Dorsolateral prefrontal cortex (tissue), 120 donors: ENCODE measurements at regions of chr10 and their contacts with region 1.

Region 1: DNA sequence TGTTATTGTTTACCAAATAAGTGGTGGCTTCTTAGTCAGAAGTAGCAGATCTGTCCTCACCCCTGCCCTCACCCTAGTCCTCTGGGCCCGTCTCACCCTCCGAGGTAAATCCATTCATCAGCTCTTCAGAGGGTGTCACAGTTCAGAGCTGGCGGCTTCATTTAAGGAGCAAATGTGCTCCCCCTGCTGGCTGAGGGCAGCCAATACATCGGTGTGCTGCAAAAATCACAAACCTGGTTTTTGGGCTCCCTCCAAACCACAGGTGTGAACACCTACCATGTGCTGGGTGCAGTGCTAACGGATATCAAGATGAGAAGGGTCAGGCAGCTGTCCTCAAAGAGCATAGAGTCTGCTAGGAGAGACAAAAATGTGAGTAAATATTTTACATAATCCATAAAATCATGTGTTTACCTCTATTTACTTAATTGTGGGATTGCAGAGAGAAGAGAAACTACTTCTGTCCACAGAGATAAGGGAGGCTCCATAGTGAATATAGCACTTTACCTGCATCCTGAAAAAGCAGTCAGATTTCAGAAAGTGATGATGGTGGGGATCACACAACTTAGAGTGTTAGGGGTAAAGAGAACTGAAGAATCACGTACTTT is 15.5 kb upstream of the CRTAC1 start:
- DNase-seq: peak; percentile 46 to 70 (median 55)
- H3K4me3 ChIP-seq: no peak overlapping the region
- H3K27ac ChIP-seq: peak overlapping the region in 4 of 59 donors; percentile 59 to 79 (median 69)
- H3K27me3 ChIP-seq: peaks cover 0 to 5% (median 0%) of the 10 kb centered on the region in 45 donors
- CTCF ChIP-seq: peak; percentile 57 to 93 (median 87)

Region 2: DNA sequence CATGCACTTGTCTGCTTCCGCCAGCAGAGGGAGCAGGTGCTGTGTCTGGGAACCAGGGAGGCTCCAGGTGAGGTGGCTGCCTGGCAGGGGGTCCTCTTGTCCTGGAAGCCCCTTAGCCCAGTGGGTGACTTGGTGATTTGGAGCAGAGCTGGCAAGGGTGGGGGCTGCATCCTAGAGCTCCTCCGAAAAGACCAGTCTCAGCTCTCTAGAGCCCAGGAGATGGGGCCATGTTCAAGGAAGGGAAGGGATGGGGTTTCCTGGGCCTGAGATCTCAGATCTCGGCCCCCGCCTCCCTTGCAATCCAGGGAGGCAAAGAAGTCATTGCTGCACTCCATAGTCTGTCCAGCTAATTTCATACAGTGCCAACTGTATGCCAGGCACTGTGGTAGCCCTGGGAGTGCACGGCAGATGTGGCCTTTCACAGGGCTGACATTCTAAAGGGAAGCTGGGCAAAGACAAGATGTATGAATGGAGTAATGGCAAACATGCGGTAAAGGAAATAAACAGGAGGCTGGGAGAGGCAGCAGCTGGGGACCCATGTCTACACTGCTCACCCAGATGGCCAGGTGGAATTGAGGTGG is 253.7 kb before region 1 on chr10:
- intact Hi-C with region 1: loop called in 1 of 2 experiments (anchors 10 kb)
- DNase-seq: peak in 9 of 10 donors; percentile 61 to 86 (median 72)
- H3K4me3 ChIP-seq: no peak overlapping the region
- H3K27ac ChIP-seq: no peak overlapping the region
- H3K27me3 ChIP-seq: peaks cover 0 to 5% (median 0%) of the 10 kb centered on the region in 45 donors
- CTCF ChIP-seq: peak in 55 of 56 donors; percentile 44 to 92 (median 86)

Region 3: GRCh38 chr10:97914837-97915211 is 131.1 kb before region 1 on chr10:
- intact Hi-C with region 1: loop called (anchors 2 kb)
- DNase-seq: peak; percentile 76 to 87 (median 82)
- H3K4me3 ChIP-seq: peak overlapping the region in 10 of 59 donors; percentile 3 to 50 (median 18)
- H3K27ac ChIP-seq: peak overlapping the region in 14 of 59 donors; percentile 1 to 87 (median 78)
- H3K27me3 ChIP-seq: no peaks in the 10 kb centered on the region
- CTCF ChIP-seq: peak; percentile 69 to 99 (median 96)

Region 4: GRCh38 chr10:98030031-98030821 is 15.7 kb before region 1 on chr10 and contains the start of gene CRTAC1:
- intact Hi-C with region 1: loop called in 1 of 2 experiments (anchors 2 kb)
- DNase-seq: peak; percentile 79 to 92 (median 86)
- H3K4me3 ChIP-seq: peak within 1 kb of the TSS; percentile 47 to 78 (median 66)
- H3K27ac ChIP-seq: peak within 1 kb of the TSS in 52 of 59 donors; percentile 28 to 87 (median 74)
- H3K27me3 ChIP-seq: peaks cover 0 to 22% (median 0%) of the 10 kb centered on the region in 45 donors
- CTCF ChIP-seq: peak in 31 of 56 donors; percentile 6 to 63 (median 30)
- total RNA-seq, gene CRTAC1: 13.6 to 61.1 (median 37.8) TPM

Region 5: DNA sequence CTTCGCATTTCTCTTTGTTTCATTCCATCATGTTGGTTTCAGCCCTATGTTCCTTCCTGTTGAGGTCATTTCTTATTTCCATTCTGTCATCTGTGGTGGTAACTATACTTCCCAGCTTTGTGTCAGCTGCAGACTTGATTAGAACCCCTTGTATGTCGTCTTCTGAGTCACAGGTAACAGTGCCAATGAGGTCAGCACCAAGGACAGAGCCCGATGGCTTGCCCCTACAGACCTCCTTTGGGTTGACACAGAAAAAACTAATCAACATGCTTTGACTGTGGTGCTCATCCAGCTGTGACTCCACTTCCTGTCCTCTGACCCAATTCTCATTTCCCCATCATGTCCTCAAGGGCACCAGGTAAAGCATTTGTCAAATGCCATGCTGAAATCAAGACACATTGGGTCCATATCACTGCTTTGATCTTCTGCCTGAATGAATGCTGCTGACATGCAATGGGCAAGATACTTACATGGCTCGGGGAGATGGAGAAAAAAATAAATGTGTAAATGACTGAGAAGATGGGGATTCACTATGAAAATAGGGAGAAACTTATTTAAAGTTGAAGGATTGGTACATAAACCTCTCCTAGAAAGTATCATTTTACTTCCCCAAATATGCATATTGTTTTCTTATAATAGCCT is 10.1 kb after region 1 on chr10:
- intact Hi-C with region 1: no loop called
- DNase-seq: no peak
- H3K4me3 ChIP-seq: no peak overlapping the region
- H3K27ac ChIP-seq: no peak overlapping the region
- H3K27me3 ChIP-seq: peaks cover 0 to 27% (median 0%) of the 10 kb centered on the region in 45 donors
- CTCF ChIP-seq: no peak

Region 6: DNA sequence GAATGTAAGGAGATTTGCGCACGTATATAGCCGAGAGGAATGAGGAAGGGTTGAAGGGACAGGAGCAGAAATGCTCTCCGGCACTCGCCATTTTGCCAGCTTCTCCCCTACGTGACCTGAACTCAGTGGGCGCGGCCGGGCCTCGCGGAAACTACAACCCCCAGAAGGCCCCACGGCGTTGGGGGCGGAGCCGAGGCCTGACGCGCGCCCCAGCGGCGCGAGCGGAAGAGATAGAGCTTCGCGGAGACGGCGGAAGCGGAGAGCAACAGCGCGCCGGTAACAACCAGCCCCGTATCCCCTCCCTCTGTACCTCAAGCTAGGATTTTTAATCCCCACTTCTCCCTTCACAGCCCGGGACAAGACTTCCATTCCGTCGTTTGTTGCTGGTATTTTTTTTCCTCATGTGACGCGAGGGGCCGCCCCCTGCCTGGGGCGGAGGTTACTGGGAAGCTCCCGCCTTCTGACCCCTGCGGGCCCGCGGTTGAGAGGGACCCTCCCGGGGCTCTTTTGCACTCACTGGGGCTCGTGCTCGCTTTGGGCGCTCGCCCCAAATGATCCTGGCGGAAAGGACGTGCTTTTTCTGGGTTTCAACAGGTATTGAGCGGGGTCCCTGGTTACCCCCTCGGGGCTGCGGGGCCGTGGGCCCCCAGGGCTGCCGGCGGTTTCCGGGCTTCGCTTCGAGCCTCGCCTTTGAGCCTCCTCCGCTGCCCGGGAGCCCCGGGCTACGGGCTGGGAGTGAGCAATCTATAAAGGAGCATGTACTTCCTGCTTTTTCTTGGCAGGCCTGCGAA is 88.7 kb after region 1 on chr10 and contains the start of gene R3HCC1L:
- intact Hi-C with region 1: loop called in 1 of 2 experiments (anchors 5 kb)
- DNase-seq: peak; percentile 78 to 94 (median 88)
- H3K4me3 ChIP-seq: peak within 1 kb of the TSS; percentile 44 to 100 (median 94)
- H3K27ac ChIP-seq: peak within 1 kb of the TSS; percentile 11 to 94 (median 87)
- H3K27me3 ChIP-seq: no peaks in the 10 kb centered on the region
- CTCF ChIP-seq: peak in 34 of 56 donors; percentile 8 to 58 (median 33)
- total RNA-seq, gene R3HCC1L: 8.3 to 15.3 (median 11.1) TPM